ENCODE measurements at regions of chr11 and their contacts with region 1.

Region 1: GRCh38 chr11:97398246-97398645 is 1008.4 kb downstream of the JRKL start:
- DNase-seq: no peak
- ATAC-seq: no peak
- H3K4me3 ChIP-seq: no peak overlapping the region
- H3K27ac ChIP-seq: no peak overlapping the region
- H3K4me1 ChIP-seq: no peaks in the 10 kb centered on the region
- H3K27me3 ChIP-seq: no peaks in the 10 kb centered on the region
- CTCF ChIP-seq: no peak

Region 2: DNA sequence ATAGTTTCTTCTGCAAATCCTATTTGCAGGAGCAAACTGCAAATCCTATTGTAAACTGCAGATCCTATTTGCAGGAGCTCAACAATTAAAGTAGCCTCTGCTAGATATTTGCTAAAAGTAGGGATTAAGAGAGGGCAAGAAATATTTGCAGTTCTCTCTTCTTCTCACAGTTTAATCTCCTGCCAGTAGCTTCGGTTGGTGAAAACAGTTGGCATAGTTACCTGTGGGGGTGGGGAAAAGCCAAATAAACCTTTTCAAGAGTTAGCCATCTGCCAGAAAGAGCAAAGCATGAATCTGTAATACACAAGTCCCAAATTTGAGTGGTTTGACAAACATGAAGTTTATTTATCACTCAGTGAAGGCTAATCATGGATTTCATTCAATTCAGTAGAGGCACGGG is 66.0 kb before region 1 on chr11:
- CTCF ChIA-PET with region 1: no interaction called
- POLR2A ChIA-PET with region 1: no interaction called
- in situ Hi-C with region 1: no loop called
- intact Hi-C with region 1: no loop called
- DNase-seq: no peak
- ATAC-seq: no peak
- H3K4me3 ChIP-seq: no peak overlapping the region
- H3K27ac ChIP-seq: no peak overlapping the region
- H3K4me1 ChIP-seq: no peaks in the 10 kb centered on the region
- H3K27me3 ChIP-seq: no peaks in the 10 kb centered on the region
- CTCF ChIP-seq: no peak

Region 3: DNA sequence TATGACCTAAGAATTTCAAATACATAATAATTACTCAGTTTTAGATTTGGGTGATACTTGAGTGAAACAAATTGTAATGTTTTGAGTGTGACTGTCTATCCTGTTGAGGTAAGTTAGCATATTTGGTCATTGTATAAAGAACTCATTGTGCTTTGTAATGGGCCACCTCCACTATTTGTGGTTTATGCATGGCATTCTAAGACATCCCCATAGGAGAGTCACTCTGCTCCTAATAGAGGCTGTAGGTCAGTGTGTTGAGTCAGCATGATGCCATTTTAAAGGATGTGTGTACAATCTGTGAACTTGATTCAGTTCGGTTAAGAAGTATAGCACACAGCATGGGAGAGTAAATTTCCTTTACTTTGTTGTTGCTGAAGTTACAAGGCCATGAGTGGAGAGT is 104.0 kb after region 1 on chr11:
- CTCF ChIA-PET with region 1: no interaction called
- POLR2A ChIA-PET with region 1: no interaction called
- in situ Hi-C with region 1: no loop called
- intact Hi-C with region 1: loop called (anchors 5 kb)
- DNase-seq: no peak
- ATAC-seq: no peak
- H3K4me3 ChIP-seq: no peak overlapping the region
- H3K27ac ChIP-seq: no peak overlapping the region
- H3K4me1 ChIP-seq: no peaks in the 10 kb centered on the region
- H3K27me3 ChIP-seq: no peaks in the 10 kb centered on the region
- CTCF ChIP-seq: no peak

Measured in Panc1 (cell line).